ENCODE measurements at regions of chr22 and their contacts with region 1.

Region 1: DNA sequence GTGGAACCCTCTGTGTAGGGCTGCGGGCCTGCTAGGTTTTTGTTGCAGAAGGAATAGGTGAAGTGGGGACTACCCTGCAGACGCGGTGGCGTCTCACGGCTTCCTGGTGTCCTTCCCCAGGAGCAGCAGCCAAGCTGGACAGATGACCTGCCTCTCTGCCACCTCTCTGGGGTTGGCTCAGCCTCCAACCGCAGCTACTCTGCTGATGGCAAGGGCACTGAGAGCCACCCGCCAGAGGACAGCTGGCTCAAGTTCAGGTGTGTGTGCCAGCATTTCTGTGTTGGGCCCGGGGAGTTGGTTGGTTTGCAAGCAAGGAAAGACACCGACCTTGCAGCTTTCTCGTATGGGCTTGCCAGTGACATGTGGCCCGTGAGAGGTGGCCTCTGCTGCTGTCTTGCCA is 15.3 kb downstream of the TAB1 start:
- DNase-seq: no peak

Region 2: DNA sequence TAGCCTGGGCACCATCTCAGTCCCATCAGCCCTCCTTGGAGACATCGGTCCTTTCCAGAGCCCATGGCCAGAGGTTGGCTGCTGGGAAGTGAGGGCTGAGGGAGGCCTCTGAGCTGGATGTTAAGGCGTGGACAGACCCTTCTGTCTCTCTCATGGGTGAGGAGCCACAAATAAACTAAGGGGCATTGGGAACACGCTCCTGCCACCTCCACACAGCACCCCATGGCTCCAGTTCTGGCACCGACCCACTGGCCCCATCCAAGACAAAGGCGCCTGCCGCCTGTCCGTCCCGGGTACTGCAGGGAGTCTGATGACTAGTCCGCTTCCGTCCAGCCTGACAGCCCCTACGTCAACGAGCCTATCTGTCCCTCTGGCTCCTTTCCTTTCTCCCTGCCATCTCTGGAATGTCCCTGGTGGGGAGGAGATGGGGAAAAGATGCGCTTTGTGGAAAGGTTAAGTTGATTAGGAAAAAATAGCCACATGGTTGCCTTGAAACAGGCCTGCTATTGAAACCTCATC is 180.6 kb before region 1 on chr22:
- CTCF ChIA-PET with region 1: no interaction called
- POLR2A ChIA-PET with region 1: no interaction called
- DNase-seq: no peak

Region 3: DNA sequence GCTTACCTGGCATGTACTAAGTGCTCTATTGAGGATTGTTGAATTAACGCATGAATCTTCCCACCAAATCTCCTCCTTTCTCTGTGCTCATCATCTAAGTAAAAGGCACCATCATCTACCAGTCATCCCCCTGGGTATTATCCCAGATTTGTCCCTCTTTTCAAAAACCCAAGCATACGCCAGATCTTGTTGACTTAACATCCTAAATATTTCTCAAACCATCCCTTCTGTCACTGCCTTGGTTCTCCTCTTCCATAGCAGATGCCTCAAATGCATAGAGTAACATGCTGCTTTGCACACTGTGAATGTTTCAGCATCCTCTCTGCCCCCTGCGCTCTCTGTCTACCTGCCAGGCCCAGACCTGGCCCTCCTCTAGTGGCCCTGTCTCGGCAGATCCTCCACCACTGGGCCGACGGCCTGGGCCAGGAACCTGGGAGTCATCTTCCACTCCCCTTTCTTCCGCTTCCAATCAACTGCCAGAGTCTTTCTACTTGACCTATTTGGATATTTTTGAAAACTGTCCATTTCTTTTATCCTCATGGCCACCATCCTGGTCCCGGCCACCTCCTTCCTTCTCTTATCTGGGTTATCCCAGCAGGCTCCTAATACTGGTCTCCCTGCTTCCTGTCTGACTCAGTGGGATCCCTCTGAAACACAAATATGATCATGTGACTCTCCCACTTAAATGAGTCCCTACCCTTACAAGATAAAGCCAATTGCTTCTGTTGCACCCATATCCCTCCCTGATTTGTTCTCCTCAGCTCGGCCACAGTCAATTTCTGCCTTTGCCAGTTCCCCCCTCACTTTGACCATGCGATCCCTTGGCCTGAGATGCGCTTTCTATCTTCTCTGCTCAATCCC is 18.7 kb before region 1 on chr22:
- CTCF ChIA-PET with region 1: no interaction called
- POLR2A ChIA-PET with region 1: interaction called, 15 read pairs
- DNase-seq: no peak

Region 4: GRCh38 chr22:39428578-39429071 is 13.7 kb after region 1 on chr22:
- CTCF ChIA-PET with region 1: no interaction called
- POLR2A ChIA-PET with region 1: no interaction called
- DNase-seq: no peak

Region 5: DNA sequence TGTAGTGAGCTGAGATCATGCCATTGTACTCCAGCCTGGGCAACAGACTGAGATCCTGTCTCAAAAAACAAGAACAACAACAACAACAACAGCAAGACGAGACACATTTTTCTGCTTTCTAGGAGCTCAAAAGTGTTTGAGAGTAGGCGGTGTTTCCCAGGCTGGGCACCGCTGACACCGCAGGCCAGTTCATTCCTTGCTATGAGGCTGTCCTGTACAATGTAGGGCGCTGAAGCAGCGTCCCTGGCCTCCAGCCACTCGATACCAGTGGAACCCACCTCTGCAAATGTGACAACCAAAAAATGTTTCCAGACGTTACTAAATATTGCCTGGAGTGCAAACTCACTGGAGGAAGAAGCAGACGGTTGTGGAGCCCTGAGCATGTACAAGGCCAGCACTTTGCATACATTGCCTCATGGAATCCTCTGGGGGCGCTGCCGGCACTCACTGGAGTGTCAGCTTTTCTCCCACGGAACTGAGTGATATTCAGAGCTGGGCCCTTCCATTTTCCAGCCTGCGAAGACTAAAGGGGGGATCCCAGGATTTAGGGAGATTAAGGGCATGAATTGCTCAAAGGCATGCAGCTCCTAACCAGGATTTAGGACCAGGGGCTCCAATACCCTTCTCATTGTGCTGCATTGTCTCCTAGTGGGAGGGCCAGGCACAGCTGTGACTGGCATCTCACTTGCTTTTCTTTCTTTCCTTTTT is 81.4 kb after region 1 on chr22:
- CTCF ChIA-PET with region 1: interaction called, 10 read pairs
- POLR2A ChIA-PET with region 1: no interaction called
- DNase-seq: peak; percentile 81

Region 6: GRCh38 chr22:39537975-39538374 is 123.1 kb after region 1 on chr22:
- CTCF ChIA-PET with region 1: no interaction called
- POLR2A ChIA-PET with region 1: no interaction called
- DNase-seq: no peak

Measured in HEK293T (cell line).